AG04449 (cell line): ENCODE measurements at regions of chrX and their contacts with region 1.

Region 1: DNA sequence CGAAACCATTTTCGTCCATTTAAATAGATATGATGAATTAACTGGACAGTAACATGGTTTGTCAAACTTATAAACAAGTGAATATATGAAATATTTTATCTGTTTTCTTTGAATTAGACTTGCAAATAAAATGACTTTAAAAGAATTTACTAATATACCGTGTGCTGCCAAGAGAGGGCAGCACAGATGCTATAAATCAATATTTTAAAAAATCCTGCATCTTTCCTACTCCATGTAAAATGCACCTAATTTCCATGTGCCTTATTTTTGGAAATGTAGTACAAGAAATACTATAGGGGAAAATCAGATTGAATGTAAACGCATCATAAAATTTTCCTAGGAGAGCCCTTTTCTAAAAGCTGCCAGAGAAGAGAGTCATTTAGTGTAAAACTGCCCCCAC is 62.2 kb downstream of the PRKX start:
- DNase-seq: no peak
- H3K4me3 ChIP-seq: no peak overlapping the region
- CTCF ChIP-seq: no peak

Region 2: GRCh38 chrX:3393581-3394111 is 257.6 kb before region 1 on chrX:
- CTCF ChIA-PET with region 1: no interaction called
- POLR2A ChIA-PET with region 1: no interaction called
- DNase-seq: peak; percentile 52
- H3K4me3 ChIP-seq: no peak overlapping the region
- CTCF ChIP-seq: no peak

Region 3: GRCh38 chrX:3811331-3812311 is 160.3 kb after region 1 on chrX:
- CTCF ChIA-PET with region 1: interaction called, 32 read pairs
- POLR2A ChIA-PET with region 1: no interaction called
- DNase-seq: no peak
- H3K4me3 ChIP-seq: no peak overlapping the region; the same call in 1 of the 2 replicates
- CTCF ChIP-seq: peak; percentile 54